ENCODE measurements at regions of chr5 and their contacts with region 1.

Region 1: GRCh38 chr5:149434162-149435014 is 55.3 kb upstream of the IL17B start:
- DNase-seq: peak; percentile 82
- ATAC-seq: peak; percentile 84
- H3K4me3 Mint-ChIP-seq: no peak overlapping the region
- H3K27ac Mint-ChIP-seq: no peak overlapping the region
- H3K4me1 Mint-ChIP-seq: peaks cover 30% of the 10 kb centered on the region
- H3K27me3 Mint-ChIP-seq: no peaks in the 10 kb centered on the region
- CTCF ChIP-seq: peak; percentile 67

Region 2: GRCh38 chr5:149317281-149318048 is 116.9 kb before region 1 on chr5:
- CTCF ChIA-PET with region 1: interaction called, 12 read pairs
- POLR2A ChIA-PET with region 1: no interaction called
- DNase-seq: no peak
- ATAC-seq: peak; percentile 52
- H3K4me3 Mint-ChIP-seq: no peak overlapping the region
- H3K27ac Mint-ChIP-seq: no peak overlapping the region; the same call in 1 of the 2 replicates
- H3K4me1 Mint-ChIP-seq: peaks cover 16% of the 10 kb centered on the region
- H3K27me3 Mint-ChIP-seq: no peaks in the 10 kb centered on the region; the same call in 1 of the 2 replicates
- CTCF ChIP-seq: 0 out of 2 replicates have a peak, but pooled peaks have one; percentile 24

Region 3: DNA sequence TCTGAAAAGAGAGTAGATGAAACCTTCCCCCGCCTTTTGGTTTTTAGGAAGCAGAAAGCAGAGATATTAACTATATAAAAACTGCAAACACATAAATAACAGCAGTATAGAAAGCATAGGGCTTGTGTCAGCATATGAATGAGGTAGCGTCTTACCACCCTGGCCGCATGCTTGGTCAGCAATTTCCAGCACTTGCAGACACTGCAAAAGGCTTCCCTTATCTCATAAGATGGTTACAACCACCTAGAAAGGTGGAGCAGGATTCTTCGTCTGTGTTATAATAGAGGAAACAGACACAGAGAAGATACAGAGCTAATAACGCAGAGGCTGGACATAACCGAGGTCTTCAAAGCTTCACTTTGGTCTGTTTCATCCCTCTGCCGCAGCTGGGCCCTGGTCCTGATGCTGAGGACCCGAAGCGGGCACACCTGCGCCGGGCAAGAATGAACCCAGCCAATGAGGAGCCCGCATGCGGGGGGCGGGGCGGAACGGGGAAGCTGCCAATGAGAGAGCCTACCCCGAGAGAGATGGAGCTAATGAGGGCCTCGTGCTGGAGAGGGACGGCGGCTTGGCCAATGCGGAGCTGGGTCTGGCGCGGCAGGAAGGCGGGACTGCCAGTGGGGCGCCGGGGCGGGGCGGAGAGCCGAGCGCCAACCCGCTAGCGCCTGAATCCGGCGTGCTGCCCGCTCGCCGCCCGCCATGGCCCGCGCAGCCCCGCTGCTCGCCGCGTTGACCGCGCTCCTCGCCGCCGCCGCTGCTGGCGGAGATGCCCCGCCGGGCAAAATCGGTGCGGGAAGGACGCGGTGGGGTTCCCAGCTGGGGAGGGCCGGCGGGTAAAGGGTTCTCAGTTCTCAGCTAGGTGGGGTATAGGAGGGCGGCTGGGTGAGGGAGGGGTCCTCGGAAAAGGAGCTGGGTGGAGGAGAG is 76.8 kb before region 1 on chr5 and contains the start of gene PCYOX1L:
- CTCF ChIA-PET with region 1: interaction called, 13 read pairs
- POLR2A ChIA-PET with region 1: no interaction called
- DNase-seq: peak; percentile 99
- ATAC-seq: peak; percentile 100
- H3K4me3 Mint-ChIP-seq: peak within 1 kb of the TSS; percentile 87
- H3K27ac Mint-ChIP-seq: no peak within 1 kb of the TSS
- H3K4me1 Mint-ChIP-seq: peaks cover 16% of the 10 kb centered on the region
- H3K27me3 Mint-ChIP-seq: peaks cover 3% of the 10 kb centered on the region; the same call in 1 of the 2 replicates
- CTCF ChIP-seq: no peak
- total RNA-seq, gene PCYOX1L: 8.1 to 19.2 TPM (median 17.2 TPM) in 3 replicates

Region 4: GRCh38 chr5:149376104-149376503 is 58.3 kb before region 1 on chr5:
- CTCF ChIA-PET with region 1: interaction called, 146 read pairs
- POLR2A ChIA-PET with region 1: no interaction called
- DNase-seq: no peak
- ATAC-seq: no peak
- H3K4me3 Mint-ChIP-seq: no peak overlapping the region
- H3K27ac Mint-ChIP-seq: no peak overlapping the region
- H3K4me1 Mint-ChIP-seq: peaks cover 5% of the 10 kb centered on the region; the same call in 1 of the 2 replicates
- H3K27me3 Mint-ChIP-seq: no peaks in the 10 kb centered on the region
- CTCF ChIP-seq: no peak

Region 5: DNA sequence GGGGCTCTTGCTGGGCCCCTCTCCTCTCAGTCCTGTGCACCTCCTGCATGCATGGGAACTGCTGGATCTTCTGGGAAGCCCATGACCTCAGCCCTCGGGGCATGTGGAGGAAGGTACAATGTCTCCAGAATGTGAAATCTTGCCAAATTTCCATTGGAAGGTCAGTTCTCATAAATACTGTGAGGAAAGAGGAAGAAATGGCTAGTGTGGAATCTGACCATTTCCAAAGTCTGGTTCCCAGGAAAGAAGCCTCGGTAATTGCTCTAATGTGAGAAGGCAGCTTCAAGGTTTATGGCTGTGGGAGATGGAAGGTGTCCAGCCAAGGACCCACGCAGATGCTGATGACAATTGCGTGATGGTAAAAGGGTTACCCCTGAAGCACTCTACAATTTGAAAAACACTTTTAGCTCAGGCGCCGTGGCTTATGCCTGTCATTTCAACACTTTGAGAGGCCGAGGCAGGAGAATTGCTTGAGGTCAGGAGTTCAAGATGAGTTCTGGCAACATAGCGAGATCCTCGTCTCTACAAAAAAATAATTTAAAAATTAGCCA is 47.2 kb before region 1 on chr5:
- CTCF ChIA-PET with region 1: interaction called, 110 read pairs
- POLR2A ChIA-PET with region 1: no interaction called
- DNase-seq: no peak
- ATAC-seq: no peak
- H3K4me3 Mint-ChIP-seq: no peak overlapping the region
- H3K27ac Mint-ChIP-seq: no peak overlapping the region
- H3K4me1 Mint-ChIP-seq: peaks cover 5% of the 10 kb centered on the region
- H3K27me3 Mint-ChIP-seq: no peaks in the 10 kb centered on the region
- CTCF ChIP-seq: no peak

Region 6: GRCh38 chr5:149422366-149423048 is 11.9 kb before region 1 on chr5:
- CTCF ChIA-PET with region 1: interaction called, 57 read pairs
- POLR2A ChIA-PET with region 1: no interaction called
- DNase-seq: peak; percentile 49
- ATAC-seq: peak; percentile 43
- H3K4me3 Mint-ChIP-seq: no peak overlapping the region
- H3K27ac Mint-ChIP-seq: no peak overlapping the region
- H3K4me1 Mint-ChIP-seq: peaks cover 46% of the 10 kb centered on the region
- H3K27me3 Mint-ChIP-seq: no peaks in the 10 kb centered on the region
- CTCF ChIP-seq: no peak

Region 7: GRCh38 chr5:149561848-149562247 is 127.5 kb after region 1 on chr5:
- CTCF ChIA-PET with region 1: interaction called, 57 read pairs
- POLR2A ChIA-PET with region 1: no interaction called
- DNase-seq: no peak
- ATAC-seq: peak; percentile 58
- H3K4me3 Mint-ChIP-seq: no peak overlapping the region
- H3K27ac Mint-ChIP-seq: peak overlapping the region; percentile 94
- H3K4me1 Mint-ChIP-seq: peaks cover 38% of the 10 kb centered on the region
- H3K27me3 Mint-ChIP-seq: no peaks in the 10 kb centered on the region
- CTCF ChIP-seq: no peak

Region 8: GRCh38 chr5:149711338-149711737 is 276.9 kb after region 1 on chr5:
- CTCF ChIA-PET with region 1: no interaction called
- POLR2A ChIA-PET with region 1: no interaction called
- DNase-seq: no peak
- ATAC-seq: no peak
- H3K4me3 Mint-ChIP-seq: no peak overlapping the region
- H3K27ac Mint-ChIP-seq: no peak overlapping the region
- H3K4me1 Mint-ChIP-seq: peaks cover 29% of the 10 kb centered on the region
- H3K27me3 Mint-ChIP-seq: peaks cover 12% of the 10 kb centered on the region
- CTCF ChIP-seq: no peak

Measured in WTC11 (cell line).